Activated naive CD4-positive, alpha-beta T cell treated with anti-CD3 and anti-CD28 coated beads for 36 hours (primary cell): ENCODE measurements at regions of chr12 and their contacts with region 1.

Region 1: GRCh38 chr12:8949342-8950220 is at the start of gene M6PR:
- DNase-seq: peak; percentile 95
- H3K4me3 Mint-ChIP-seq: peak within 1 kb of the TSS; percentile 99
- H3K27ac Mint-ChIP-seq: peak within 1 kb of the TSS; percentile 96
- H3K4me1 Mint-ChIP-seq: peaks cover 56% of the 10 kb centered on the region
- H3K27me3 Mint-ChIP-seq: no peaks in the 10 kb centered on the region
- total RNA-seq, gene M6PR: 139 to 140 TPM

Region 2: GRCh38 chr12:8120072-8120713 is 829.4 kb before region 1 on chr12:
- CTCF ChIA-PET with region 1: no interaction called
- intact Hi-C with region 1: no loop called
- DNase-seq: no peak
- H3K4me3 Mint-ChIP-seq: no peak overlapping the region
- H3K27ac Mint-ChIP-seq: no peak overlapping the region
- H3K4me1 Mint-ChIP-seq: no peaks in the 10 kb centered on the region
- H3K27me3 Mint-ChIP-seq: no peaks in the 10 kb centered on the region

Region 3: GRCh38 chr12:8572507-8572906 is 377.1 kb before region 1 on chr12:
- CTCF ChIA-PET with region 1: no interaction called
- intact Hi-C with region 1: no loop called
- DNase-seq: no peak
- H3K4me3 Mint-ChIP-seq: no peak overlapping the region
- H3K27ac Mint-ChIP-seq: no peak overlapping the region
- H3K4me1 Mint-ChIP-seq: peaks cover 10% of the 10 kb centered on the region
- H3K27me3 Mint-ChIP-seq: peaks cover 2% of the 10 kb centered on the region

Region 4: GRCh38 chr12:8697476-8698131 is 252.0 kb before region 1 on chr12 and contains the start of gene RIMKLB:
- CTCF ChIA-PET with region 1: interaction called, 3 read pairs
- intact Hi-C with region 1: loop called (anchors 2 kb)
- DNase-seq: peak; percentile 68
- H3K4me3 Mint-ChIP-seq: peak within 1 kb of the TSS; percentile 91
- H3K27ac Mint-ChIP-seq: peak within 1 kb of the TSS; percentile 30
- H3K4me1 Mint-ChIP-seq: peaks cover 25% of the 10 kb centered on the region
- H3K27me3 Mint-ChIP-seq: no peaks in the 10 kb centered on the region
- total RNA-seq, gene RIMKLB: 5.2 to 5.5 TPM

Region 5: GRCh38 chr12:8960176-8960575 is 10.6 kb after region 1 on chr12:
- CTCF ChIA-PET with region 1: interaction called, 13 read pairs
- intact Hi-C with region 1: no loop called
- DNase-seq: no peak
- H3K4me3 Mint-ChIP-seq: no peak overlapping the region
- H3K27ac Mint-ChIP-seq: peak overlapping the region; percentile 3
- H3K4me1 Mint-ChIP-seq: peaks cover 69% of the 10 kb centered on the region
- H3K27me3 Mint-ChIP-seq: no peaks in the 10 kb centered on the region

Region 6: DNA sequence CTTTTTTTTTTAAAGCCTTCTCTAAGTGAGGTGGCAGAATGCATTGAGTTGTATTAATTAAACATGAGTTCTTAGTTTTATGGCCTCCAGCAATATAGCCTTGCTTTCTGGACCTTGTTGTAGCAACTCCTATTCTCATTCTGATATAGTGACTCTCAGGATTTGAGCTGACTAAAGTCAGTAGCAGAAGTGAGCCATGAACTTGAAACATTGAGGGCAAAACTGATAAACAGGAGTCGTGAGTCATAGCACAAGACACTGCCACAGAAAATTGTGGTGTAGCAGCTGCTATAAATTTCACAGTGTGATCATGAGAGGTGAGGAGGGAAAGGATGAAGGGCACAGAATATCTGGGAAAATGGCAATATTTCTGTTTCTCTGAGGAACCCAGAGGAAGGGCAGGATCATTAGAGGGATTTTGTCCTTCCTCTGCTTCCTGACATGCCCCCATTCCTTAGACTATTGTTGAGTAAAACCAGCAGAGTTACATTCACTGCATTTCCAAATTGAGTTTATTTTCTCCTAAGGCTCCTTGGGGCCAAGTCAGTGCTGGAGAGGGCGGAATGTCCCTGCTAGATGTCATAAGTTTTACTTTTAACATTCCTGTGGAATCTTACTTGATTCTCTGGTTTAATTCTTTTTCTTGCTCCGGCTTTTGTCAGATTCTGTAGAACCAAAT is 47.2 kb after region 1 on chr12:
- CTCF ChIA-PET with region 1: interaction called, 12 read pairs
- intact Hi-C with region 1: loop called (anchors 1 kb)
- DNase-seq: peak; percentile 65
- H3K4me3 Mint-ChIP-seq: no peak overlapping the region
- H3K27ac Mint-ChIP-seq: peak overlapping the region; percentile 16
- H3K4me1 Mint-ChIP-seq: peaks cover 67% of the 10 kb centered on the region
- H3K27me3 Mint-ChIP-seq: no peaks in the 10 kb centered on the region

Region 7: GRCh38 chr12:9032202-9033178 is 82.9 kb after region 1 on chr12:
- CTCF ChIA-PET with region 1: interaction called, 191 read pairs
- intact Hi-C with region 1: no loop called
- DNase-seq: peak; percentile 31
- H3K4me3 Mint-ChIP-seq: no peak overlapping the region
- H3K27ac Mint-ChIP-seq: peak overlapping the region; percentile 41
- H3K4me1 Mint-ChIP-seq: peaks cover 64% of the 10 kb centered on the region
- H3K27me3 Mint-ChIP-seq: no peaks in the 10 kb centered on the region

Region 8: GRCh38 chr12:9049520-9050133 is 100.0 kb after region 1 on chr12:
- CTCF ChIA-PET with region 1: interaction called, 51 read pairs
- intact Hi-C with region 1: loop called (anchors 1 kb)
- DNase-seq: peak; percentile 33
- H3K4me3 Mint-ChIP-seq: no peak overlapping the region
- H3K27ac Mint-ChIP-seq: no peak overlapping the region
- H3K4me1 Mint-ChIP-seq: peaks cover 11% of the 10 kb centered on the region
- H3K27me3 Mint-ChIP-seq: no peaks in the 10 kb centered on the region